PC-3 (cell line): ENCODE measurements at regions of chr6 and their contacts with region 1.

Region 1: GRCh38 chr6:6686748-6687601 is 98.5 kb downstream of the LY86 start:
- DNase-seq: peak; percentile 99
- ATAC-seq: peak; percentile 79
- H3K4me3 ChIP-seq: peak overlapping the region; percentile 52
- H3K27ac ChIP-seq: peak overlapping the region; percentile 77
- H3K4me1 ChIP-seq: peaks cover 42% of the 10 kb centered on the region
- H3K27me3 ChIP-seq: no peaks in the 10 kb centered on the region
- CTCF ChIP-seq: no peak

Region 2: DNA sequence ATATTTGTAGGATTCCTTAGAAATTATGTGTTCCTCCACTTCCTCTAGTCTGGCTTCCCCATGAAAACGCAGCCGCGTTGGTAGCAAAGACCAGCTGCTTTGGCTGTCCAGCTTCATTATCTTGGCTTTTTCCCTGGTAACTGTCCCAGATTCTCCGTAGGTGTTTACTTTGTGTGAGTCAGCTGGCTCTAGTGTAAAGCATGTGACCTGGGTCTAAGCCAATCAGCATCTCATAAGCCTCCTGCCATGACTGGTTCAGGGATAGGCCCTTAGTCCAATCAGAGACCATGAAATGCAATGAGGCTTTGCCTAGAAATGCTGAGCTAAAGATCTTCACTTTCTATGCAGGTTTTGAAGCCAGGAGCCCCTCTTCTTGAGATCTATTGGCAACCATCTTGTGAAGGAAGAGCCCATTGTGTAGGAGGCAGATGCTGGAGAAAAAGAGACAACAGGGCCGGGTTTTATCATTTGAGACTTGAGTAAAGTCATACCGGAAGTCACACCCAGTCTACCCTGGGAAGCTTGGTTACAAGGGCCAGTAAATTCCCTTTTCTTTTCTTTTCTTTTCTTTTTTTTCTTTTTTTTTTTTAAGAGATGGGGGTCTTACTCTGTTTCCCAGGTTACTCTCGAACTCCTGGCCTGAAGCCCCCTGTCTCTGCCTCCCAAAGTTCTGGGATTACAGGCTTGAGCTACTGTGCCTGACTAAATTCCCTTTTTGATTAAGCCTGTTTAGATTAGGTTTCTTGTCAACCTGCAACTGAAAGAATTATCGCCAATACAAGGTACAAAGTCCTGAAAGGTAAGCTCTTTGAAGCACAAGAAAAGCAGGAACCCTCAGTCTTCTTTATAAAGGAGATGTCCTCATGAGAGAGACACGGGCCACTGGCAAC is 164.3 kb after region 1 on chr6:
- CTCF ChIA-PET with region 1: no interaction called
- POLR2A ChIA-PET with region 1: no interaction called
- intact Hi-C with region 1: loop called (anchors 5 kb)
- DNase-seq: peak; percentile 99
- ATAC-seq: peak; percentile 99
- H3K4me3 ChIP-seq: no peak overlapping the region
- H3K27ac ChIP-seq: peak overlapping the region; percentile 88
- H3K4me1 ChIP-seq: peaks cover 32% of the 10 kb centered on the region
- H3K27me3 ChIP-seq: no peaks in the 10 kb centered on the region
- CTCF ChIP-seq: no peak

Region 3: DNA sequence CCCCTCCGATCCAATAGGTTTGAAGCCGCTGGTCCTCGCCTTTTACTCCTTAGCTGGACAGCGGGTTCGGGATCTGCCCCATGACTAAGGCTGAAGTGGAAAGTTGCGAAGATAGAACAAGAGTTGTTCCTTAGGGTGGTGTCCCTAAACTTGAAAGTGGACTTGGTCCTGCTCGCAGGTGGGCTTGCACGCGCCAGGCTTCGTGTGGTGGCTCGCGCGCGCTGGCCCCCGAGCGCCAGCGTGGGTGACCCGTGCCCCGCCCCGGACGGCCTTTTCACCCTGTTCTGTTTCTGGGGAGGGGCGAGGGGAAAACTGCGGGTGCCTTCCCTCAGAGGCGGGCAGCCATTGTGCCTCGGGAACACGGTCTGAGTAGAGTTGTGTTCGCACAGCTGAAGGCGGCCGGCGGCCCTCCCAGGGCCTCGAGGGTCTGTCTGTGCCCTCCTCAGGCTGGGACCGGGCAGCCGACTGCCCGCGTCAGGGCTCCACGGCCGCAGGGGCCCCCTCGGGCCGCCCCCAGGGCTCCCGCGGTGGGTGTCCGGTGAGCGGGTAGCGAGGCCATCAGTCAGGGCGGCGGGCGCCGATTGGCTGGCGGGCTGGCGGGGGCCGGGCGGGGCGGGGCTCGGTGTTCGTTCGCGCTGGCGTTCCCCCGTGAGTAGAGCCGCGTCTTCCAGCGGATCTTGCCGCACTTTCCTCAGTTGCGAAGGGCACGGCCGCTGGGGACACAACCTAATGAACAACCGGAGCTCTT is 453.8 kb after region 1 on chr6:
- CTCF ChIA-PET with region 1: no interaction called
- POLR2A ChIA-PET with region 1: no interaction called
- intact Hi-C with region 1: loop called (anchors 5 kb)
- DNase-seq: peak; percentile 68
- ATAC-seq: peak; percentile 83
- H3K4me3 ChIP-seq: peak overlapping the region; percentile 74
- H3K27ac ChIP-seq: peak overlapping the region; percentile 71
- H3K4me1 ChIP-seq: peaks cover 52% of the 10 kb centered on the region
- H3K27me3 ChIP-seq: no peaks in the 10 kb centered on the region
- CTCF ChIP-seq: no peak